CD8-positive, alpha-beta T cell (primary cell): ENCODE measurements at regions of chr14 and their contacts with region 1.

Region 1: GRCh38 chr14:100239840-100240724 is 1.1 kb downstream of the YY1 start:
- DNase-seq: peak; percentile 68 to 92 (median 84)
- ATAC-seq: peak; percentile 36
- H3K4me3 ChIP-seq: peak overlapping the region; percentile 66 to 77
- H3K4me3 Mint-ChIP-seq: peak overlapping the region; percentile 90
- H3K27ac ChIP-seq: peak overlapping the region; percentile 56 to 85
- H3K27ac Mint-ChIP-seq: peak overlapping the region; percentile 94
- H3K4me1 ChIP-seq: peaks cover 56% of the 10 kb centered on the region
- H3K4me1 Mint-ChIP-seq: peaks cover 59% of the 10 kb centered on the region
- H3K27me3 ChIP-seq: no peaks in the 10 kb centered on the region
- H3K27me3 Mint-ChIP-seq: no peaks in the 10 kb centered on the region
- CTCF ChIP-seq: peak; percentile 54

Region 2: GRCh38 chr14:99955826-99956455 is 284.1 kb before region 1 on chr14:
- CTCF ChIA-PET with region 1: no interaction called
- POLR2A ChIA-PET with region 1: no interaction called
- intact Hi-C with region 1: no loop called
- DNase-seq: no peak
- ATAC-seq: no peak
- H3K4me3 ChIP-seq: no peak overlapping the region
- H3K4me3 Mint-ChIP-seq: no peak overlapping the region
- H3K27ac ChIP-seq: no peak overlapping the region
- H3K27ac Mint-ChIP-seq: no peak overlapping the region
- H3K4me1 ChIP-seq: no peaks in the 10 kb centered on the region
- H3K4me1 Mint-ChIP-seq: no peaks in the 10 kb centered on the region
- H3K27me3 ChIP-seq: peaks cover 0 to 9% of the 10 kb centered on the region in 2 experiments
- H3K27me3 Mint-ChIP-seq: peaks cover 6% of the 10 kb centered on the region
- CTCF ChIP-seq: no peak

Region 3: GRCh38 chr14:99971087-99971940 is 268.8 kb before region 1 on chr14:
- CTCF ChIA-PET with region 1: no interaction called
- POLR2A ChIA-PET with region 1: no interaction called
- intact Hi-C with region 1: loop called (anchors 1 to 5 kb)
- DNase-seq: peak; percentile 62 to 89 (median 78)
- ATAC-seq: peak; percentile 92
- H3K4me3 ChIP-seq: peak overlapping the region; percentile 35 to 67
- H3K4me3 Mint-ChIP-seq: peak overlapping the region; percentile 78
- H3K27ac ChIP-seq: no peak overlapping the region
- H3K27ac Mint-ChIP-seq: no peak overlapping the region
- H3K4me1 ChIP-seq: peaks cover 11% of the 10 kb centered on the region
- H3K4me1 Mint-ChIP-seq: peaks cover 12% of the 10 kb centered on the region
- H3K27me3 ChIP-seq: no peaks in the 10 kb centered on the region
- H3K27me3 Mint-ChIP-seq: peaks cover 5% of the 10 kb centered on the region
- CTCF ChIP-seq: no peak

Region 4: DNA sequence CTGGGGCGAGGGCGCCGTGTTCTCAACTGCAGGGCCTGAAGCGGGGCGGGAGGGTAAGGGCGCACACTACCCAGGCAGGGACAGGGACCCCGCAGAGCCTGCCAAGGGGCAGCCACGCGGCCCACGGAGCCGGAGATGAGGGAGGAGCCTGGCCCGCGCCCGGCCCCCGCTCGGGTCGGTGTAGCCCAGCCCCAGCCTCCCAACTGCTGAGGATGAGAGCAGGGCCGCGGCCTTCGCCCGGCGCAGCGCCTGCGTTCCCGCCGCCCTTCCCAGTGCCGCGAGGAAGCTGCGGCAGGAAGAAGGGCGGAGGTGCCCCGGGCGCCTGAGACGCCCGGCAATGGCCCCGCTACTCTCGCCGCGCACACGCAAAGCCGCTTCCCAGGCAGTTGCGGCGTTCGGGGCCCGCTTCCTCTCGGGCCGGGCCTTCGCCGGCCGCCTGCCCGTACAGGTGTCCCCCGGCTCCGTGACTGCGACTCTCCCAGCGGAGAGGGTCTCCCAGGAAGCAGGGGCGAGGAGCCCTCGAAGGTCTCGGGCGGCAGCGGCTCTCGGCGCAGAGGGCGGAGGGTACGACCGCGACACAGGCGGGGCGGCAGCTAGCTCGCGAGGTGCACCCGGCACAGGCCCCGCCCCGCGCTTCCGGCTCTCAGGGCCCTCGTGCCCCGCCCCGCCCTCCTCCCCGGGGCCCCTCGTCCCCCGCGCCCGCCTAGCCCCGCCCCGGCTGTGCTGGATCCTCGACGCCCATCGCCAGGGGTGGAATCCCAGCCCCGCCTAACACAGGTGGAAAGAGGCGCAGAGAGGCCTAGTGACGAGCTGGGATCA is 25.9 kb before region 1 on chr14:
- CTCF ChIA-PET with region 1: interaction called, 9 read pairs
- POLR2A ChIA-PET with region 1: interaction called, 19 read pairs
- intact Hi-C with region 1: loop called (anchors 1 kb)
- DNase-seq: peak; percentile 78 to 95 (median 92)
- ATAC-seq: peak; percentile 97
- H3K4me3 ChIP-seq: peak overlapping the region; percentile 70 to 92
- H3K4me3 Mint-ChIP-seq: peak overlapping the region; percentile 80
- H3K27ac ChIP-seq: peak overlapping the region; percentile 88 to 90
- H3K27ac Mint-ChIP-seq: peak overlapping the region; percentile 90
- H3K4me1 ChIP-seq: peaks cover 33% of the 10 kb centered on the region
- H3K4me1 Mint-ChIP-seq: peaks cover 29% of the 10 kb centered on the region
- H3K27me3 ChIP-seq: no peaks in the 10 kb centered on the region
- H3K27me3 Mint-ChIP-seq: no peaks in the 10 kb centered on the region
- CTCF ChIP-seq: no peak

Region 5: DNA sequence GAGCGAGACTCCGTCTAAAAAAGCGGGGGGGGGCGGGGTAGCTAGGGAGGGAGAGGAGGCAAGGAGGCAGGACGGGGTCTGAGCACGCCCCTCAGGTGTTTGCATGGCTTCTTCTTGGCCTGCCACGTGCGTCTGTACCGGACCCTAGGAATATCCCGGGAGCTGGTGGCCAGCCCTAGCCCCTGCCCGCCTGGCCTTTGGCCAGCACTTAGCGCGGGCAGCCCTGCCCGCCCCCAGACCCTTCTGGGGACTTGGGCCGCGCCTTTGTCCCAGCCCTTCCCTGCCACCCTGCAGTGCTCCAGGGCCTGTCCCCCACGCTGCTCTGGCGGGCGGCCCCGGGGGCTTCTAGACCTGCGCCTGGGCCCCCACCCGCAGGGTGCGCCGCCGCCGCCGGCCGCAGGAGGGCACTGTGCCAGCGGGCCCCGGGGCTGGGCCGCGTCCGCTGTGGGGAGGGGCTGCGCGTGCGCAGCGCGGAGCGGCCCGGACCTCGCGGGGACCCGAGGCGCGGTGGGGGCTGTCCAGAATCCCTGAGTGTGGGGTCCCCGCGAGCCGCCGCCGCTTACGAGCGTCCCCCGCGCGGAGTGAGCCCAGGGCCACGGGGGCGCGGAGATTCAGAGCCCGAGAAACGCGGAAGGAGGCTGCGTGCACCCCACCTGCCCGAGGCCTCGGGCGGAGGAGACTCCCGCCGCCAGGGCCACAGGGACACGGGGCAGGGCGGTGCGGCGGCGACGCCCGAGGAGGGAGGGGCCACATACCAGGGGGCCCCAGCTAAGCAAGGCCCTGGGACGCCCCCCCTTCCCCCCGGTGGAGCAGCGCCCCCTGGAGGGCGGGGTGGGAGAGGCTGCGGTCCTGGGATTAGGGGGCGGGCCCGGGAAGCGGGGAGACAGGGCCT is 45.2 kb after region 1 on chr14:
- CTCF ChIA-PET with region 1: interaction called, 7 read pairs
- POLR2A ChIA-PET with region 1: no interaction called
- intact Hi-C with region 1: loop called (anchors 1 kb)
- DNase-seq: peak; percentile 64 to 88 (median 78)
- ATAC-seq: peak; percentile 91
- H3K4me3 ChIP-seq: peak overlapping the region; percentile 63 to 90
- H3K4me3 Mint-ChIP-seq: peak overlapping the region; percentile 81
- H3K27ac ChIP-seq: peak overlapping the region; percentile 72 to 76
- H3K27ac Mint-ChIP-seq: no peak overlapping the region
- H3K4me1 ChIP-seq: peaks cover 5% of the 10 kb centered on the region
- H3K4me1 Mint-ChIP-seq: peaks cover 11% of the 10 kb centered on the region
- H3K27me3 ChIP-seq: no peaks in the 10 kb centered on the region
- H3K27me3 Mint-ChIP-seq: no peaks in the 10 kb centered on the region
- CTCF ChIP-seq: peak; percentile 96